ENCODE measurements at regions of chr19 and their contacts with region 1.

Region 1: DNA sequence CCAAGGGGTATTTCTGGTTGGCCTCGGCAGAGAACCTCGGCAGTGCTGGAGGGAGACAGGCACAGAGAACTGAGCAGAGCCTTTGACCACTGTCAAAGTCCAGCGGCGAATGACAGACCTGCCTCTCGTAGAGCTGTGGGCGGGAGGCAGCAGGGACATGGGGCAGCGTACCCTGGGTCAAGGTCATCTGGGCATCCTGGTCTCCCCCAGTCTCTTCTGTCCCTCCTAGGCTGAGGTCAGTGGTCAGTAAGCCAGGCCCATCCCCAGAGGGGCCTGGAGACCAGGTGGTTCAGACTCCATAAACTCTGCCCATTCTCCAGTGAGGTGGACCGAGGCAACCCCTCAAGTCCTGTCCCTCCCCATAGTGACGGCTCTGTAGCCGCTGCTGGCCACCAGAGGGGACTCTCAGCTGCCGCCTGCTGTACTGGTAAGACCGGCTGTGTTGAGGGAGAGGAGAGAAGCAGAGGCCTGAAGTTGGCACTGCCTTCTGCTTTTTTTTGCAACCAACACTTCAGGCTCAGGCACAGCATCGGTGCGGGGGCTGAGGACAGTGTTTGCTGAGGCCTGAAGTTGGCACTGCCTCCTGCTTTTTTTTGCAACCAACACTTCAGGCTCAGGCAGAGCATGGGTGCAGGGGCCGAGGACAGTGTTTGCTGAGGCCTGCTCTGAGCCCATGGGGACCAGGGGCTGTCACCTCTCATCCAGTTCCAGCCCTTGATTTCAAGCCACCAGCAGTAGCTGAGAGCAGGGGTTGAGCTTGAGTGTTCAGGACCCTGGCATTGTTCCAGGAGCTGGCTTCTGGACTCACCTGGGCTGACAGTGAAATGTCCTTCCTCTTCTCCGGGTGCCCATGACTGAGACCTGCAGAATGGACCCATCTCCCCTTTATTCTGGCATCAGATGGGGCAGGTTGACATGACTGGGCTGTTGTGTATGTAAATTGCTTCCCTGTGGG is at the start of gene PGLYRP2:
- DNase-seq: peak in 1 of 2 donors; percentile 29
- ATAC-seq: peak in 7 of 8 donors; percentile 38 to 79 (median 70)
- H3K4me3 ChIP-seq: no peak within 1 kb of the TSS
- H3K27ac ChIP-seq: no peak within 1 kb of the TSS
- H3K4me1 ChIP-seq: peaks cover 0 to 5% (median 0%) of the 10 kb centered on the region in 9 donors
- H3K27me3 ChIP-seq: no peaks in the 10 kb centered on the region
- CTCF ChIP-seq: peak in 6 of 9 donors; percentile 15 to 44 (median 34)
- total RNA-seq, gene PGLYRP2: not detected

Region 2: DNA sequence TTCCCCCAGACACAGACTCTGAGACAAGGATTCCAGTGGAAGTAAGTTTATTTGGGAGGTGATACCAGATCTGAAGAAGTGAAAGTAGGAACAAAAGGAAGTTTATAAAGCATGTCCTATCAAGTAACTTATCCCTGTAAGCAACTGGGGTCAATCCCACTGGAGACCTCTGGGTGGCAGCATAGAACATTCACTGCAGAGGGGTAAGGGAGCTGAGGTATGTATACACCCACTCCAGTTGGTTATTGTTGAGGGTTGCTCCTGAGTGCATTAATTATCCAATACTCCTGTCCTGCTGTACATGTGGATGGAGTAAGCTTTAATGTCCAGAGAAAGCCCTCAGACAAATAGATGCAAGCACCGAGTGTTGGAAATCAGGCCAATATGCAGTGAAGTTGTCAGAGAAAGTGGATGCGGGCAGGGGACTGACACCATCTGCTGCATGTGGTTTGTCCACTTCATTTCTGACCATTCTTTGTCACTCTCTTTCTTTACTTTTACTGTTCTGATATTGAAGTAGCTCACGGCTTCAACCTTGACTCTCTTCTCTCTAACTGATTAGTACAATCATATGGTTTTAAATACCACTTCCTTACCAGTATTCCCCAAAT is 325.6 kb before region 1 on chr19:
- intact Hi-C with region 1: no loop called
- DNase-seq: no peak
- ATAC-seq: no peak
- H3K4me3 ChIP-seq: no peak overlapping the region
- H3K27ac ChIP-seq: no peak overlapping the region
- H3K4me1 ChIP-seq: peaks cover 0 to 3% (median 0%) of the 10 kb centered on the region in 9 donors
- H3K27me3 ChIP-seq: peaks cover 0 to 4% (median 0%) of the 10 kb centered on the region in 7 donors
- CTCF ChIP-seq: peak in 7 of 9 donors; percentile 41 to 59 (median 46)

Region 3: GRCh38 chr19:15404097-15404779 is 75.4 kb before region 1 on chr19:
- intact Hi-C with region 1: no loop called
- DNase-seq: no peak
- ATAC-seq: peak; percentile 24 to 76 (median 56)
- H3K4me3 ChIP-seq: peak overlapping the region in 1 of 10 donors; percentile 6
- H3K27ac ChIP-seq: peak overlapping the region; percentile 24 to 80 (median 64)
- H3K4me1 ChIP-seq: peaks cover 24 to 85% (median 61%) of the 10 kb centered on the region in 9 donors
- H3K27me3 ChIP-seq: no peaks in the 10 kb centered on the region
- CTCF ChIP-seq: no peak

Region 4: DNA sequence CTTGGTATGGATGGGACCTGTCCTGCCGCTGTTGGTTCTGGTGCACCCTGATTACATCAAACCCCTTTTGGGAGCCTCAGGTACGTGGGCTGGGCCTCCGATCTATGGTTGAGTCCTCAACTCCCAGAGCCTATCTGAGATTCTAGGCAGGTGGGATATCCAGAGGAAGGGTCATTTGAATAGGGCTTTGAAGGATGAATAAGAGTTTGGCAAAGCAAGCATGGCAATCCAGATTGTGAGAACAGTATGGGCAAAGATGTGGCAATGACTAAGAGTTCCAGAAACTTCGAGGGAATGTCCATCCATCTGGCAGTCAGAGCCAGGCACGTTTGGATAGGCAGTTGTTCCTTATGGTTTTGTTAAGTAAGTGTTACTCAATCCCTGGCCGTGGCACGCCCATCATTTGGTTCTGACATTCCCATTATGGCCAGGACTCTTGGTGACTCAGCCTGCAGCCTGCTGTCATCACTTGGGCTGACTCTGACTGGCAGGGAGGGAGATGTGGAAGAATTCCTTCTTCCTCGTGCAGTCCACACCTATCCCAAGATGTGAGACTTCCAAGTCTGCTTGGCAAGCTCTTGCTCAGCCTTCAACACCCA is 50.2 kb after region 1 on chr19:
- intact Hi-C with region 1: loop called in 1 of 10 experiments (anchors 10 kb)
- DNase-seq: no peak
- ATAC-seq: no peak
- H3K4me3 ChIP-seq: no peak overlapping the region
- H3K27ac ChIP-seq: no peak overlapping the region
- H3K4me1 ChIP-seq: peaks cover 0 to 11% (median 0%) of the 10 kb centered on the region in 9 donors
- H3K27me3 ChIP-seq: peaks cover 0 to 55% (median 13%) of the 10 kb centered on the region in 7 donors
- CTCF ChIP-seq: no peak

Region 5: GRCh38 chr19:15540435-15540834 is 60.8 kb after region 1 on chr19:
- intact Hi-C with region 1: loop called in 1 of 10 experiments (anchors 10 kb)
- DNase-seq: no peak
- ATAC-seq: no peak
- H3K4me3 ChIP-seq: no peak overlapping the region
- H3K27ac ChIP-seq: no peak overlapping the region
- H3K4me1 ChIP-seq: no peaks in the 10 kb centered on the region
- H3K27me3 ChIP-seq: peaks cover 0 to 42% (median 9%) of the 10 kb centered on the region in 7 donors
- CTCF ChIP-seq: no peak